CD8-positive, alpha-beta T cell (primary cell): ENCODE measurements at regions of chr15 and their contacts with region 1.

Region 1: GRCh38 chr15:40344631-40345120 is 3.9 kb upstream of the CCDC9B start:
- DNase-seq: peak; percentile 41 to 81 (median 69)
- ATAC-seq: peak; percentile 98
- H3K4me3 ChIP-seq: no peak overlapping the region
- H3K4me3 Mint-ChIP-seq: no peak overlapping the region
- H3K27ac ChIP-seq: no peak overlapping the region
- H3K27ac Mint-ChIP-seq: no peak overlapping the region
- H3K4me1 ChIP-seq: no peaks in the 10 kb centered on the region
- H3K4me1 Mint-ChIP-seq: no peaks in the 10 kb centered on the region
- H3K27me3 ChIP-seq: no peaks in the 10 kb centered on the region
- H3K27me3 Mint-ChIP-seq: no peaks in the 10 kb centered on the region
- CTCF ChIP-seq: peak; percentile 75

Region 2: GRCh38 chr15:39553947-39554693 is 790.6 kb before region 1 on chr15:
- CTCF ChIA-PET with region 1: no interaction called
- POLR2A ChIA-PET with region 1: no interaction called
- intact Hi-C with region 1: no loop called
- DNase-seq: no peak
- ATAC-seq: no peak
- H3K4me3 ChIP-seq: no peak overlapping the region
- H3K4me3 Mint-ChIP-seq: no peak overlapping the region
- H3K27ac ChIP-seq: no peak overlapping the region
- H3K27ac Mint-ChIP-seq: no peak overlapping the region
- H3K4me1 ChIP-seq: no peaks in the 10 kb centered on the region
- H3K4me1 Mint-ChIP-seq: no peaks in the 10 kb centered on the region
- H3K27me3 ChIP-seq: no peaks in the 10 kb centered on the region
- H3K27me3 Mint-ChIP-seq: no peaks in the 10 kb centered on the region
- CTCF ChIP-seq: no peak

Region 3: GRCh38 chr15:40323239-40323952 is 21.3 kb before region 1 on chr15 and contains the start of gene INAFM2:
- CTCF ChIA-PET with region 1: interaction called, 421 read pairs
- POLR2A ChIA-PET with region 1: interaction called, 3 read pairs
- intact Hi-C with region 1: no loop called
- DNase-seq: peak; percentile 79 to 97 (median 93)
- ATAC-seq: peak; percentile 90
- H3K4me3 ChIP-seq: peak within 1 kb of the TSS; percentile 34 to 45
- H3K4me3 Mint-ChIP-seq: peak within 1 kb of the TSS; percentile 80
- H3K27ac ChIP-seq: peak within 1 kb of the TSS in 1 of 2 experiments; percentile 47
- H3K27ac Mint-ChIP-seq: peak within 1 kb of the TSS; percentile 74
- H3K4me1 ChIP-seq: peaks cover 21% of the 10 kb centered on the region
- H3K4me1 Mint-ChIP-seq: peaks cover 22% of the 10 kb centered on the region
- H3K27me3 ChIP-seq: no peaks in the 10 kb centered on the region
- H3K27me3 Mint-ChIP-seq: no peaks in the 10 kb centered on the region
- CTCF ChIP-seq: peak; percentile 60
- total RNA-seq, gene INAFM2: 4.3 to 8.1 TPM

Region 4: DNA sequence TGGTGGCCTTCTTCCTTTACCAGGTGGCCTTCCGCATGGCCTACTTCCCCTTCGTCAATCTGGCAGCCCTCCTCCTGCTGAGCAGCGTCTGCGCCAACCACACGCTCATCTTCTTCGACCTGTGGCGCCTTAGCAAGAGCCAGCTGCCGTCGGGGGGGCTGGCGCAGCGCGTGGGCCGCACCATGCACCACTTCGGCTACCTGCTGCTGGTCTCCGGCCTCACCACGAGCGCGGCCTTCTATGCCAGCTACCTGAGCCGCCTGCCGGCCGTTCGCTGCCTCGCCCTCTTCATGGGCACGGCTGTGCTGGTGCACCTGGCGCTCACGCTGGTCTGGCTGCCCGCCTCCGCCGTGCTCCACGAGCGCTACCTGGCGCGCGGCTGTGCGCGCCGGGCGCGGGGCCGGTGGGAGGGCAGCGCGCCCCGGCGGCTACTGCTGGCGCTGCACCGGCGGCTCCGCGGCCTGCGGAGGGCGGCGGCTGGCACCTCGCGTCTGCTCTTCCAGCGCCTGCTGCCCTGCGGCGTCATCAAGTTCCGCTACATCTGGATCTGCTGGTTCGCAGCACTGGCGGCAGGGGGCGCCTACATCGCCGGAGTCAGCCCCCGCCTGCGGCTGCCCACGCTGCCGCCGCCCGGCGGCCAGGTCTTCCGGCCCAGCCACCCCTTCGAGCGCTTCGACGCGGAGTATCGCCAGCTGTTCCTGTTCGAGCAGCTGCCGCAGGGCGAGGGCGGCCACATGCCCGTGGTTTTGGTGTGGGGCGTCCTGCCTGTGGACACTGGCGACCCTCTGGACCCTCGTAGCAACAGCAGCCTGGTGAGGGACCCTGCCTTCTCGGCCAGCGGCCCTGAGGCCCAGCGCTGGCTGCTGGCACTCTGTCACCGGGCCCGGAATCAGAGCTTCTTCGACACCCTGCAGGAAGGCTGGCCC is 23.3 kb after region 1 on chr15:
- CTCF ChIA-PET with region 1: interaction called, 126 read pairs
- POLR2A ChIA-PET with region 1: interaction called, 3 read pairs
- intact Hi-C with region 1: loop called (anchors 1 kb)
- DNase-seq: peak; percentile 74 to 96 (median 85)
- ATAC-seq: peak; percentile 95
- H3K4me3 ChIP-seq: peak overlapping the region; percentile 58 to 75
- H3K4me3 Mint-ChIP-seq: peak overlapping the region; percentile 83
- H3K27ac ChIP-seq: peak overlapping the region; percentile 17 to 62
- H3K27ac Mint-ChIP-seq: peak overlapping the region; percentile 84
- H3K4me1 ChIP-seq: peaks cover 23% of the 10 kb centered on the region
- H3K4me1 Mint-ChIP-seq: peaks cover 19% of the 10 kb centered on the region
- H3K27me3 ChIP-seq: no peaks in the 10 kb centered on the region
- H3K27me3 Mint-ChIP-seq: no peaks in the 10 kb centered on the region
- CTCF ChIP-seq: peak; percentile 92

Region 5: GRCh38 chr15:40421246-40422157 is 76.8 kb after region 1 on chr15:
- CTCF ChIA-PET with region 1: interaction called, 290 read pairs
- POLR2A ChIA-PET with region 1: interaction called, 4 read pairs
- intact Hi-C with region 1: loop called in 1 of 2 experiments (anchors 1 kb)
- DNase-seq: peak; percentile 65 to 89 (median 80)
- ATAC-seq: peak; percentile 99
- H3K4me3 ChIP-seq: no peak overlapping the region
- H3K4me3 Mint-ChIP-seq: no peak overlapping the region
- H3K27ac ChIP-seq: no peak overlapping the region
- H3K27ac Mint-ChIP-seq: no peak overlapping the region
- H3K4me1 ChIP-seq: peaks cover 6% of the 10 kb centered on the region
- H3K4me1 Mint-ChIP-seq: no peaks in the 10 kb centered on the region
- H3K27me3 ChIP-seq: no peaks in the 10 kb centered on the region
- H3K27me3 Mint-ChIP-seq: no peaks in the 10 kb centered on the region
- CTCF ChIP-seq: peak; percentile 80